ENCODE measurements at regions of chr3 and their contacts with region 1.

Region 1: GRCh38 chr3:151086484-151087456 is 1.3 kb downstream of the MED12L start:
- DNase-seq: peak; percentile 87
- H3K4me3 Mint-ChIP-seq: peak overlapping the region; percentile 82
- H3K27ac Mint-ChIP-seq: no peak overlapping the region
- H3K4me1 Mint-ChIP-seq: peaks cover 9% of the 10 kb centered on the region
- H3K27me3 Mint-ChIP-seq: peaks cover 46% of the 10 kb centered on the region

Region 2: DNA sequence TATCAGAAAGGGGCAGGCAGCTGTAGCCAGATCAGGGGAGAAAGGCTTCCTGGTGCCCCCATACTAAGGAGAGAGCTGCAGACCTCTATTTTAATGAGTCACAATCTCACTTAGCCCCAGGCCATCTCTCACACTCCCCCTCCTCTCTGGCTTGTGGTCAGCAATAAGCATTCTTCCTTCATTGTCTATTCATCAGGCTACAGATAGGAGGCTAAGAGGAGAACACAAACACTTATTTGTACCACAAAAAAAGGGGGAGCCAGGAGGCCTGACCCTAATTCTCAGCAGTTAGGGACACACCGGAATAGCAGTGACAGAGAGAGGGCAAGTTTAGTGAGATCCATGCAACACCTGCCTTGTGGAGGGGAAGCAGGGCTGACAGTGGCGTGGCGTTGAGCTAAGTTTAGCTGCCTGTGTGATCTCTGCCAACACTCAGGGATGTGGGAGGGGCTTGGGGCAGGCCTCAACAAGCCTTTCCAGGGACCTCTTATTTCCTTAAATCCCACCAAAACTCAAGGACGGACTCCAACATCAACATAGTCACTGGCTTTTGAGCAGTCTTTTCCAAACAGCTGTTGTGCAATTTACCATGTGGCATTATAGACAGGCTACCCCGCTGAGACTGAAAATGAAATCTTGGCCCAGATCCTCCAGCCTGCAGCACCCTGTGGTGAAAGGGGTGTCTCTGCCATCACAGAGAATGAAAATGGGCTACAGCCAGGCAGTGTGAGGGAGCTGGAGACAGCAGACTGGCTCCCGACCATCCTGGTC is 870.5 kb before region 1 on chr3:
- CTCF ChIA-PET with region 1: no interaction called
- intact Hi-C with region 1: no loop called
- DNase-seq: no peak
- H3K4me3 Mint-ChIP-seq: no peak overlapping the region
- H3K27ac Mint-ChIP-seq: no peak overlapping the region
- H3K4me1 Mint-ChIP-seq: peaks cover 1% of the 10 kb centered on the region
- H3K27me3 Mint-ChIP-seq: peaks cover 12% of the 10 kb centered on the region

Region 3: DNA sequence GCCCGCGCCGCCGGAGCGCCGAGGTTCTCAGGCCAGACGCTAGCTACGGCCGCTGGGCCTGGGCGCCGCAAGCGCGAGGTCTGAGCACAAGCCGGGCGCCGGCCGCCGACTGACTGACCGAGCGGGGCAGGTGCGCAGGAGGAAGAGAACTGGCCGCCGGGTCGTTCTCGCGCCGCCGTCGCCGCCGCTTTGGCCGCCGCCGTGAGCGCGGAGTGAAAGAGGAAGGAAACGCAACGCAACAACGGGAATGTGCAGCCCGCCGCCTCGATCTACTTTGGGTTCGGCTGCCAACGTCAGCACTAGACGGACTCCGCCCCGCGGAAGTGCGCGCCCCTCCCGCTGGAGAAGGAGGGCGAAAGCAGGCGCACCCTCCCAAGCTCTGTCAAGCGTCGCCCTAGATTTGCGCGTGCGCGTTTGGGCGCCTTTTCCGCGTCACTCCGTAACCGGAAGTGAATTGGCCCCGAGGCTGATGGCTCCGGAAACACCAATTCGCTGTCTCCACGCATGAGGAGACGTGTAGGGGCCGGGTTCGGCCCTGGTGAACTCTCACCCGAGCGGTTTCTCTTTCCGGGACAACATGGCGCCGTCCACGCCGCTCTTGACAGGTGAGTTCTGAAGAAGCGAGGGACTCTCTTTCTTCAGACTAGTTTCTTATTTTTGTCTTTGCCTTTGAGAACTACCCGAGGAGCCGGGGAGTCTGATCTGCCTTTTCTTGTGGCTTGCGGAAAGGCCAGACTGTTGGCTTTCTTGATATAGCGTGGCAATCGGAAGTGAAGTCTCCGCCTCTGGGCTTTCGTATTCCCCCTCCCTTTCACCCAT is 540.3 kb before region 1 on chr3 and contains the starts of genes EIF2A and SERP1:
- CTCF ChIA-PET with region 1: no interaction called
- intact Hi-C with region 1: loop called (anchors 1 kb)
- DNase-seq: peak; percentile 99
- H3K4me3 Mint-ChIP-seq: peak within 1 kb of the TSS; percentile 97
- H3K27ac Mint-ChIP-seq: peak within 1 kb of the TSS; percentile 95
- H3K4me1 Mint-ChIP-seq: peaks cover 69% of the 10 kb centered on the region
- H3K27me3 Mint-ChIP-seq: no peaks in the 10 kb centered on the region
- total RNA-seq, gene EIF2A: 133 to 135 TPM
- total RNA-seq, gene SERP1: 95.9 to 105 TPM

Region 4: DNA sequence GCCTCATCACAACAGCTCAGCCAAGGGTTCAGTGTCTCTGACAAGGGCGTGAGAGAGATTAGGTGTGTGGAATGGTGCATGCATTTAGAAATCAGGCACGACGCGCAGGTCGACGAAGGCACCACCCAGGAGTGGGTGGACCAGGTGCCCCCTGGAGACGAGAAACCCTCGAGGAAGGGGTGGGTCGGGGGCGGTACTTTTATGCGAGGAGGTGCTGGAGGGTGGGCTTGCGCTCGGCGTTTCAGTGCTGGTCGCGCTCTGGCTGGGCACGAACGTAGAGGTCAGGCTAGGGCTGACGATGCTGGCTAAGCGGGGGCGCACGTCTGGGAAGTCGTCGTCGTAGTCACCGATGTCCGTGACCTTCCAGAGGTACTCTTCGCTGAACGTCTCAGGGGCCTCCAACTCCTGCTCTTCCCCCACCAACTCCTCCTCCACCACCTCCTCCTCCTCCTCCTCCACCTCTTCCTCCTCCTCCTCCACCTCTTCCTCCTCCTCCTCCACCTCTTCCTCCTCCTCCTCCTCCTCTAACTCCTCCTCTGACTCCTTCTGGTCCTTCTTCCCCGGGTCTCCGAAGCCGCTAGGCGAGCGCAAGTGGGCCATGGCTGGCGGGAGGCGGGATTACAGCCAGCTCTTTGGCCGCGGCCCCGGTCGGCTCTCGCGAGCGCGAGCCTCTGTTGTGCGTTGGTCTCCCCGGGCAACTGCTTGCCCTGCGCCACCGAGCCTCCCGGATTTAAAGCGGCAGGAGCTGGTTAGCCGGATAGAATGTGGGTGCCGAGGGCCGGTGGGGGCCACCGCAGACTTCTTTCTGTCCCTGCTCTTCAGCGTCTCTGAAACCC is 383.3 kb before region 1 on chr3 and contains the start of gene ERICH6:
- CTCF ChIA-PET with region 1: interaction called, 3 read pairs
- intact Hi-C with region 1: loop called (anchors 5 kb)
- DNase-seq: peak; percentile 88
- H3K4me3 Mint-ChIP-seq: peak within 1 kb of the TSS; percentile 96
- H3K27ac Mint-ChIP-seq: no peak within 1 kb of the TSS
- H3K4me1 Mint-ChIP-seq: peaks cover 25% of the 10 kb centered on the region
- H3K27me3 Mint-ChIP-seq: no peaks in the 10 kb centered on the region
- total RNA-seq, gene ERICH6: not detected

Region 5: DNA sequence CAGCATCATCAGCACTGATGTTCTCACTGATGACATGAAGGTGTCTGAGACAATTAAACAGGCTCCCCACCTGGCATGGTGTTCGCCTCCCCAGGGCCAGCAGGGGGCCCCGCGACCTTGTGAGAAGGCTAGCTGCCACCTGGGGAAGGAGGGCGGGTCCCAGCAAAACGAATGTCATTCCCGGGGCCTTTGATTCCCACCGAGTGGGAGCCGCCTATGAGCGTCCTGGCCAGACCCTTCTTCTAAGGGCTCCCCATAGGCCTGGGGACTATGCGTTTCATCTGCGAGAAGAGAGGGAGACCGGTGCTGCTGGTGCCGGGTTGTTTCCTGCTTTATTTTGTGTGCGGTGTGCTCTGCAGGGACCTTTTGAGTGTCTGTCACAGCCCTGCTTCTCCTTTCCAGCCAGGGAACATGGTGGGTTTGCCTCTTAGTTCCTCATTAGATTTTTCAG is 161.0 kb before region 1 on chr3:
- CTCF ChIA-PET with region 1: interaction called, 14 read pairs
- intact Hi-C with region 1: loop called (anchors 1 kb)
- DNase-seq: peak; percentile 72
- H3K4me3 Mint-ChIP-seq: peak overlapping the region; percentile 39
- H3K27ac Mint-ChIP-seq: no peak overlapping the region
- H3K4me1 Mint-ChIP-seq: peaks cover 4% of the 10 kb centered on the region
- H3K27me3 Mint-ChIP-seq: peaks cover 5% of the 10 kb centered on the region

Region 6: DNA sequence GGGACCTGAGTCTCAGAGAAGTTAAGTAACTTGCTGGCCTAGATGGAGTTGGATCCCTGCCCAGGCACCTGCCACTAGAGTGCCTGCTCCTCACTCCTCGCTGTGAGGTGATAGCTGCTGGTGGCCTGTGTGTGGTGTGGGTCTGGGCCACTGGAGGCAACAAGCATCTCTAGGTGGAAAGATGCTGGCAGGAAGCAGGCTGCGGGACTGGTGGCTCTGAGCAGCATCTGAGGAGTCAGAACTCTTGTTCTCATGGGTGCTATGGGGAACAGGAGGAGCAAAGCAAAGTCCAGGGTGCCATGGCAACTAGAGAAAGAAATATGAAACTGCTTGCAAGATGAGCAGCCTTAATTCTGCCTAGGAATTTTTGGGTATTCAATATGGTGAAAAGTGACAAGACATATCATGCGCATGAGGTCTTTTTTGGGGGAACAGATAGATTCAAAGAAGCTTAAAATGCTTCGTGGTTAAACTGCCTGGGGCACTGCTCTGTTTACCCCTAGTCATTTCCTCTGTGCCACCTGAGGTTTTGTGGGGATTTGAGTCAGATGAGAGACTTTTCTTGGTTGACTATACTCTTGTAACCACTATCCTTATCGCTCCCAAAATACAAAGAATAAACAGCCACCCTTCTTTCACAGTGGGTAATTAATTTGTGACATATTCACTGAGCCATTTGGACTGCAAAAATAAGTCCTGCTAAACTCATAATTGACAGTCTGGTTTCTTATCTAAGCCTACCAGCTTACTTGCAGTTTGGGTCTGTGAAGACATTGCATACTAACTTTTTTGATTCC is 49.0 kb after region 1 on chr3:
- CTCF ChIA-PET with region 1: interaction called, 6 read pairs
- intact Hi-C with region 1: loop called (anchors 2 kb)
- DNase-seq: peak; percentile 71
- H3K4me3 Mint-ChIP-seq: no peak overlapping the region
- H3K27ac Mint-ChIP-seq: peak overlapping the region; percentile 48
- H3K4me1 Mint-ChIP-seq: peaks cover 21% of the 10 kb centered on the region
- H3K27me3 Mint-ChIP-seq: peaks cover 10% of the 10 kb centered on the region

Region 7: GRCh38 chr3:151282921-151283320 is 196.2 kb after region 1 on chr3:
- CTCF ChIA-PET with region 1: interaction called, 4 read pairs
- intact Hi-C with region 1: loop called (anchors 2 kb)
- DNase-seq: no peak
- H3K4me3 Mint-ChIP-seq: no peak overlapping the region
- H3K27ac Mint-ChIP-seq: no peak overlapping the region
- H3K4me1 Mint-ChIP-seq: peaks cover 28% of the 10 kb centered on the region
- H3K27me3 Mint-ChIP-seq: no peaks in the 10 kb centered on the region

Measured in activated naive CD4-positive, alpha-beta T cell treated with anti-CD3 and anti-CD28 coated beads for 36 hours (primary cell).